ENCODE measurements at regions of chr17 and their contacts with region 1.

Region 1: DNA sequence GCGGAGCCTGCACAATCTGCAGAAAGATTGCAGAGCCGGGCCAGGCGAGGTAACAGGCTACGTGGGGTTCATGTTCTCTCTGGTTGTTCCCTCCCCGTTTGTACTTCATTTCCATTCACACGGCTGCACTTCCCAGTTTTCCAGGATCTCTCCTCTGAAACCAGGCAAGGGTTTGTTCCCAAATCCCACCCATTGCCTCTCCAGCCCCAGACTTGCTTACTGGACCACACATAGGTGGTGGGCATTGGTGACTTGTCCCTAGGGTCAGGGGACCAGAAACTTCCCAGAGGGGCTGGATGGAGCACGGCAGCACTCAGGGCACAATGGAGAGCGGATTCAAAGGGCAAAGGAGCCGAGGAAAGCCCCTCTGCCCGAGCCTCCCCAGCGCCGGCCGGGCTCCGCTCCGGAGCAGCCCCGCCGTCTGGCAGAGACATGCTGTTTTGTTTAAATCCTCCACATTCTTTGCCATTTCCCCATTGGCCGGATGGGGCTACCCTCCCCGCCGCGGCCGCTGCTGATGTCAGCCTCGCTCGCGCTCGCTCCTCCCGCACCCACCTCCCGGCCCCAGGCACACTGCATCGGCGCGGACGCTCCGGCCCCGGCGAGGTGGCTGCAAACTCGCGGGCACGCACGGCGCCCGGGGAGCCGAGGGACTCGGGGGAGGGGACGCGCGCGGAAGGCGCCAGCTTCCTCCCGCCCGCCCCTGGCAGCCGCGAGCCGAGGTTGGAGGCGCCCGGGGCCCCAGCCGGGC is at the start of gene PITPNC1:
- DNase-seq: peak; percentile 89
- H3K4me3 ChIP-seq: peak within 1 kb of the TSS; percentile 56 to 87 (median 85)
- H3K27ac ChIP-seq: peak within 1 kb of the TSS; percentile 82
- H3K4me1 ChIP-seq: peaks cover 14% of the 10 kb centered on the region
- H3K27me3 ChIP-seq: no peaks in the 10 kb centered on the region
- CTCF ChIP-seq: no peak
- POLR2A ChIP-seq: peak; percentile 23
- total RNA-seq, gene PITPNC1: 9.6 and 10.5 TPM in 2 replicates

Region 2: DNA sequence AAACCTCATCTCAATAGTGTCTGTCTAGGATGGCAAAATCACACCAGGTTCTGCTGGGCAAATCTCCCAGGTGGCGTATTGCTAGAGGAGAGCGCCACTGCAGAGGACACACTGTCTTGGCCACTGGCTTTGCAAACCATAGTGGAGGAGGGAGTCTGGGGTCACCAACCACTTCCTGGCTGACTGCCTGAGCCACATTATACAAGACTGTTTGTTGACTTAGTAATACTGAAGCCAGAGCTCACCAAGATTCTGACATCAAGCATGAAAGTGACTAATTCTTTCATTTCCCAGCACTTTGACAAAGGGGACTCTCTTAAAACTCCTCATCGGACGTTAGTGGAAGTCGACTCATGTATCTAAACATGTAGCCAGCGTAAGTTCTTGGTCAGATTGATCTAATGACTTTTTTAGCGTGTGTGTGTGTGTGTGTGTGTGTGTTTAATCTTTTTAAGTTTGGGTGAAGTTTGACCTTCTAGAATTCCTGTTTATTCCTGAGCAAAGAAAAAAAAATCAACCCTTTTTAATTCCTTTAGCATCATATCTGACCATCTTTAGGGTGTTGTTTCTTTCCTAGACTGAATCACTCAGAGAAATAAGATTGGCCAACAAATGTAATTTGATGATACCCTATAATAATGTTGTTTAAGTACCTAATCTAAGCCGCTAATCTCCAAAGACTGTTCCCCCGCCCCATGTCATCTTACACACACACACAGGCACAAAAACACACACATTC is 13.9 kb after region 1 on chr17:
- CTCF ChIA-PET with region 1: interaction called, 12 read pairs
- POLR2A ChIA-PET with region 1: no interaction called
- dilution Hi-C with region 1: no loop called
- intact Hi-C with region 1: loop called (anchors 1 kb)
- DNase-seq: peak; percentile 93
- H3K4me3 ChIP-seq: no peak overlapping the region
- H3K27ac ChIP-seq: peak overlapping the region; percentile 59
- H3K4me1 ChIP-seq: peaks cover 12% of the 10 kb centered on the region
- H3K27me3 ChIP-seq: no peaks in the 10 kb centered on the region
- CTCF ChIP-seq: no peak
- POLR2A ChIP-seq: no peak

Region 3: GRCh38 chr17:67475236-67475937 is 98.5 kb after region 1 on chr17:
- CTCF ChIA-PET with region 1: interaction called, 295 read pairs
- POLR2A ChIA-PET with region 1: no interaction called
- dilution Hi-C with region 1: no loop called
- intact Hi-C with region 1: loop called (anchors 1 kb)
- DNase-seq: peak; percentile 81
- H3K4me3 ChIP-seq: no peak overlapping the region
- H3K27ac ChIP-seq: no peak overlapping the region
- H3K4me1 ChIP-seq: peaks cover 6% of the 10 kb centered on the region
- H3K27me3 ChIP-seq: peaks cover 0 to 2% of the 10 kb centered on the region in 2 experiments
- CTCF ChIP-seq: peak; percentile 96
- POLR2A ChIP-seq: no peak

Region 4: GRCh38 chr17:67546578-67547527 is 169.9 kb after region 1 on chr17:
- CTCF ChIA-PET with region 1: interaction called, 5 read pairs
- POLR2A ChIA-PET with region 1: no interaction called
- dilution Hi-C with region 1: no loop called
- intact Hi-C with region 1: loop called (anchors 2 kb)
- DNase-seq: peak; percentile 35
- H3K4me3 ChIP-seq: no peak overlapping the region
- H3K27ac ChIP-seq: no peak overlapping the region
- H3K4me1 ChIP-seq: peaks cover 12% of the 10 kb centered on the region
- H3K27me3 ChIP-seq: no peaks in the 10 kb centered on the region
- CTCF ChIP-seq: no peak
- POLR2A ChIP-seq: no peak

Region 5: GRCh38 chr17:67689534-67690177 is 312.7 kb after region 1 on chr17:
- CTCF ChIA-PET with region 1: interaction called, 143 read pairs
- POLR2A ChIA-PET with region 1: no interaction called
- dilution Hi-C with region 1: no loop called
- intact Hi-C with region 1: loop called (anchors 1 kb)
- DNase-seq: peak; percentile 76
- H3K4me3 ChIP-seq: no peak overlapping the region
- H3K27ac ChIP-seq: no peak overlapping the region
- H3K4me1 ChIP-seq: no peaks in the 10 kb centered on the region
- H3K27me3 ChIP-seq: no peaks in the 10 kb centered on the region
- CTCF ChIP-seq: peak; percentile 52 to 54
- POLR2A ChIP-seq: no peak

Region 6: DNA sequence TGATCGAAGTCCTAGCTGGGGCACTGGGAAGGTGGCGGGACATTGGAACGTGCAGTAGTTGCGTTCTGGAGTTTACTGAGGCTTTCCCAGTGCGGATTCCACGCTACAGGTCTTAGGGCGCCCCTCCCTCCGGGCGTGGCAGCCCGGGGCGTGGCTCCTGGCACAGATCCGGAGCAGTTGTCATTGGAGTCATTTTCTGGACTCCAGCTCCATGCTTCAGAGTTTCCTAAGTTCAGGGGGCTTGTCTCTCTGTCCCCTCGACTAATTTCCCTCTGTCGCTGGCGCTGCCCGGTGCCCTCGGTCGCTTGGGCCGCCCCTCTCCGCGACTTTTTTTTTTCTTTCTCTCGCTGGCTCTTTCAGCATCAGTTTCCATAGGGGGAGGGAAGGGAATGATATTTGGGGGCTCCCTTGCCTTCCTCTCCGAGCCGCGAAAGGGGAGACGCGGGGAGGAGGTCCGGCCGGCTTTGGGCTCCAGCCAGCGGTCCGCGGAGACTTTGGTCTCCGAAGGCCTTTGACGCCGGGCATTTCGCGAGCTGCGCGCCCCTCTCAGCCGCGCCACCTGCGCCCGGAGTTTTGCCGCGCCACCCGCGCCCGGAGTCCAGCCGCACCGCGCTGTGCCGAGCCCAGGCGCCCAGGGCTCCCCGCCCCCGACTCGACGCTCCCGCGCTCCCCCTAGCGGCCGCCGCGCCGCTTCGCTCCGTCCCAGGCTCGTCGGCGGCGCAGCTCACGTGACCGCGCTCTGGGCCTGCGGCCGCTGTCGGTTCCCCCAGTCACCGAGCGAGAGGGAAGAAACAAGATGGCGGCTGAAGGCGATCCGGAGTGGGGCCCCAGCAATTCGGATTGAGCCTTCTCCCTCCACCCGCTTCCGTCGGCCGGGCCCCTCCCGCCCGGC is 448.1 kb after region 1 on chr17 and contains the start of gene BPTF:
- CTCF ChIA-PET with region 1: interaction called, 5 read pairs
- POLR2A ChIA-PET with region 1: no interaction called
- dilution Hi-C with region 1: no loop called
- intact Hi-C with region 1: loop called (anchors 1 kb)
- DNase-seq: peak; percentile 89
- H3K4me3 ChIP-seq: peak within 1 kb of the TSS; percentile 60 to 83 (median 78)
- H3K27ac ChIP-seq: no peak within 1 kb of the TSS
- H3K4me1 ChIP-seq: peaks cover 13% of the 10 kb centered on the region
- H3K27me3 ChIP-seq: no peaks in the 10 kb centered on the region
- CTCF ChIP-seq: peak; percentile 91 to 98
- POLR2A ChIP-seq: peak; percentile 71
- total RNA-seq, gene BPTF: 78.6 and 88.1 TPM in 2 replicates